H1 (cell line): ENCODE measurements at regions of chr1 and their contacts with region 1.

Region 1: GRCh38 chr1:44747878-44748277 is 8.2 kb downstream of the KIF2C start:
- DNase-seq: no peak
- H3K4me3 ChIP-seq: no peak overlapping the region
- H3K27ac ChIP-seq: no peak overlapping the region
- H3K4me1 ChIP-seq: no peaks in the 10 kb centered on the region
- H3K27me3 ChIP-seq: no peaks in the 10 kb centered on the region
- CTCF ChIP-seq: peak; percentile 13 to 47 (median 32); a peak in 3 of 4 replicates
- EP300 ChIP-seq: no peak
- POLR2A ChIP-seq: no peak
- RAD21 ChIP-seq: no peak

Region 2: DNA sequence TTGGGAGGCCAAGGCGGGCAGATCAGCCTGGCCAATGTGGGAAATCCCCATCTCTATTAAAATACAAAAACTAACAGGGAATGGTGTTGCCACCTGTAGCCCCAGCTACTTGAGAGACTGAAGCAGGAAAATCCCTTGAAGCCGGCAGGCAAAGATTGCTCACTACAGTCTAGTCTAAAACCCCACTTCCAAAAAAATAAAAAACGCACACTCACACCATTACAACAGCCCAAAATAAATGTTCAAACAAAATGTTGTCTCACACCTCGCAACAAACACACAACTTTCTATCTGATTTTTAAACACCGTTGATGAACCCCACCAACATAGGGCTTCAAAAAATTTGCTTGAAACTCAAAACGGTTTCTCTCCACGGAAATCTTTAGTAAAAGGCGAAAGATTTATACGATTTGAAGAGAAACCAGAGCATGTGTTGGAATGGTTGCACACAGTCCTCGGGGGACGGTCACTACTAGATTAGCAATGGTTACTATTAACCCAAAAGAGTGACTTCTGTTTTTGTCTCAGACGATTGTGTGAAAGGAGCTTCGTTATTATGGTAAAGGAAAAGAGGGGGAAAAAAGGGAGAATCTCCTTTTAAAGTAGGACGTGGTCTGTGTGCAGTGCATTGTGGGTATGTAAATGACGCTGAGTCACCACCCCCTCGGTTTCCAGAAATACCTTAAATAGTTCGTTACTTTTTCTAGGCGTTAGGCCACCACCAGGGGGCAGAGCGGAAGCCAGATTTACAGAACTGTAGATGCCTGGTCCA is 17.0 kb before region 1 on chr1 and contains the start of gene RNU5D-1:
- CTCF ChIA-PET with region 1: interaction called, 42 read pairs
- POLR2A ChIA-PET with region 1: interaction called, 16 read pairs
- DNase-seq: peak in 1 of 2 experiments; percentile 94
- H3K4me3 ChIP-seq: peak within 1 kb of the TSS in 1 of 4 experiments; percentile 31; a peak in 1 of 8 replicates
- H3K27ac ChIP-seq: peak within 1 kb of the TSS; percentile 94
- H3K4me1 ChIP-seq: peaks cover 0 to 3% (median under 1%) of the 10 kb centered on the region in 4 experiments; a peak in 4 of 7 replicates
- H3K27me3 ChIP-seq: no peaks in the 10 kb centered on the region
- CTCF ChIP-seq: peak; percentile 48 to 80 (median 55)
- EP300 ChIP-seq: 0 out of 3 replicates have a peak, but pooled peaks of 1 of the 2 experiments have one; percentile 30
- POLR2A ChIP-seq: peak; percentile 99
- RAD21 ChIP-seq: peak; percentile 14 to 32; a peak in 1 of 4 replicates
- total RNA-seq, gene RNU5D-1: 17.4 TPM in 1 of 2 replicates, not detected in the other